ENCODE measurements at regions of chr3 and their contacts with region 1.

Region 1: GRCh38 chr3:42090973-42091731 is at the start of gene TRAK1:
- DNase-seq: no peak
- ATAC-seq: no peak
- H3K4me3 Mint-ChIP-seq: peak within 1 kb of the TSS; percentile 29
- H3K27ac Mint-ChIP-seq: peak within 1 kb of the TSS; percentile 86
- H3K4me1 Mint-ChIP-seq: peaks cover 82% of the 10 kb centered on the region
- H3K27me3 Mint-ChIP-seq: no peaks in the 10 kb centered on the region
- CTCF ChIP-seq: no peak
- total RNA-seq, gene TRAK1: 54.5 and 58.4 TPM in 2 replicates

Region 2: DNA sequence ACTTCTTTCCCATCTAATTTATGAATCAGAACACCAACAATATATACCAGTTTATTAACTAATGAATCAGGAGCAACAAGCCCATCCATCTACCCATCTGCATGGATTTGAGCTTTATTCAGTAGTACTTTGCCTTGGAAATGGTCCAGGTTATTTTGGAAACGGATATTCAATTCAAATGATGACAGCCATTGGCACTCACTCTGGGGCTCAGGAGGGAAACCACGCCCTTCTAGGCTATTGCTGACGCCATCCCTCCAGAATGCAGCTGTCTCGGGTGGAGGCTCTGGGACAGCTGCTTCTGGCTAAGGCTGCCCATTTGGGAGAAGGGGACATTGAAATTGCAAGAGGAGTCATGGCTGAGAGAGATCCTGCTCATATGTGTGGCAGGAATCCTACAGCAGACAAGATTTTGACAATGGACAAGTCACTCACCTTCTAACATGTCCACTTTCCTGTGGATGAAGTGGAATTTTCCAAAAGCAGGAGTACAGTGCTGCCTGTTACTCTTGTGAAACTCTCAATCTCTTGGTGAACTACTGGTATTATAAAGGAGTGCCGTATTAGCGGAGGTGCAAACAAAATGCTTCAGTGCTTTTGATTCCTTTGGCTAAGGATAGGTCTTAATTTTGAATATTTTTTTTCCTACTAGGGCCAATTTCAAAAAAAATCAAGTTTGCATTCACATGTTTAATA is 29.3 kb before region 1 on chr3:
- CTCF ChIA-PET with region 1: no interaction called
- POLR2A ChIA-PET with region 1: interaction called, 18 read pairs
- intact Hi-C with region 1: loop called (anchors 2 kb)
- DNase-seq: no peak
- ATAC-seq: no peak
- H3K4me3 Mint-ChIP-seq: no peak overlapping the region
- H3K27ac Mint-ChIP-seq: peak overlapping the region; percentile 80
- H3K4me1 Mint-ChIP-seq: peaks cover 92% of the 10 kb centered on the region
- H3K27me3 Mint-ChIP-seq: no peaks in the 10 kb centered on the region
- CTCF ChIP-seq: no peak

Region 3: DNA sequence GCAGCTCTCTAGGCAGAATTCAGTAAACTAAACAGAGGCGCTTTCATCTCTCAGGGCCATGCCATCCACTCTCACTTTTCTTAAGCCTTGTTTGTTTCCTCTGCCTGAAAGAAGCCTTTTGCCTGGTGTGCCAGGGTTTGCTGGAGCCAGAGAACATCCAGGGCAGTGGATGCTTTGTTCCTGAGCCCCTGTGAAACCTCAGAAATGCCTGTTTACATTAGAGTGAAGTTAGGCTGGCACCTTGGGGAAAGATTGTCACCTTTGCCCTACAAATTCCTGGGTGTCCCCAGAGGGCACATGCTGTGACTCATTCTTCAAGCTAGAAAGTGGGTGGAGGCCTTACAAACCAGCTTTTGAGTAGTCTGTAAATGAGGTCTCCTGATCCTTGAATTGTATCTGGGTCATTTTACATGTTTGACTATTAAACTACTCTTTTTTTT is 10.7 kb before region 1 on chr3:
- CTCF ChIA-PET with region 1: no interaction called
- POLR2A ChIA-PET with region 1: interaction called, 26 read pairs
- intact Hi-C with region 1: loop called (anchors 1 kb)
- DNase-seq: peak; percentile 51
- ATAC-seq: peak; percentile 94
- H3K4me3 Mint-ChIP-seq: peak overlapping the region; percentile 74
- H3K27ac Mint-ChIP-seq: peak overlapping the region; percentile 97
- H3K4me1 Mint-ChIP-seq: peaks cover 85% of the 10 kb centered on the region
- H3K27me3 Mint-ChIP-seq: no peaks in the 10 kb centered on the region
- CTCF ChIP-seq: no peak

Region 4: DNA sequence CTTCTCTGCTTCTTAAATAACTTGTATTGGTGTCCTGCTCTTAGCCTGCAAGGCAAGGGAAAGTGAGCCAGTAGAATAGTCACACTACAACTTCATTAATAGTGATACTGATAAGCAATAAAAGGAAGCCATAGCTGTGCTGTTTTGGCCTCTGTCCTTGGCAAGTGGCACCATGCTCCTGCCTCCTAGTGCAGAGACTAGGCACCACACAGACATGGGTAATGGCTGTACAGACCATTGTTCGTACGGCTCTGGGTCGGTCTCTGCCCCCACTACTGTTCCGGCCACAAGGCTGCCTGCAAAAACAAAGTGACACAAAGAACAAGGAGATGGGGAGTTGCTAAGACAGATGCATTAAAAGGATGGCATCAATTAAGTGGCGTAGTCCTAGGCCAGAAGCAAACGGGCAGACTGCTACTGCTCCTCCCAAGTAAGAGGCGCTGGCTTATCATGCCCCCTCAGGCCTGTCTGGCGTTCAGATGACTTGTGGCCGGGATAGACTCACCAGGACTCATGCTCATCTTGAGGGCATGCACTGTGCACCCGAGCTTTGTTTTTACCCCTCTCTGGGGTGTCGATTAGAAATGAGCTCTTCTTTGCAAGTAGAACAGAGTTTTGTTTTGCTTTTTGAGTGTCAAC is 75.6 kb after region 1 on chr3:
- CTCF ChIA-PET with region 1: no interaction called
- POLR2A ChIA-PET with region 1: no interaction called
- intact Hi-C with region 1: no loop called
- DNase-seq: no peak
- ATAC-seq: no peak
- H3K4me3 Mint-ChIP-seq: no peak overlapping the region
- H3K27ac Mint-ChIP-seq: peak overlapping the region; percentile 13
- H3K4me1 Mint-ChIP-seq: peaks cover 90% of the 10 kb centered on the region
- H3K27me3 Mint-ChIP-seq: no peaks in the 10 kb centered on the region
- CTCF ChIP-seq: no peak

Region 5: GRCh38 chr3:42894698-42895579 is 803.8 kb after region 1 on chr3:
- CTCF ChIA-PET with region 1: no interaction called
- POLR2A ChIA-PET with region 1: no interaction called
- intact Hi-C with region 1: no loop called
- DNase-seq: no peak
- ATAC-seq: no peak
- H3K4me3 Mint-ChIP-seq: no peak overlapping the region
- H3K27ac Mint-ChIP-seq: no peak overlapping the region
- H3K4me1 Mint-ChIP-seq: no peaks in the 10 kb centered on the region
- H3K27me3 Mint-ChIP-seq: peaks cover 21% of the 10 kb centered on the region
- CTCF ChIP-seq: no peak